Stomach (tissue), 19 donors: ENCODE measurements at regions of chr3 and their contacts with region 1.

Region 1: DNA sequence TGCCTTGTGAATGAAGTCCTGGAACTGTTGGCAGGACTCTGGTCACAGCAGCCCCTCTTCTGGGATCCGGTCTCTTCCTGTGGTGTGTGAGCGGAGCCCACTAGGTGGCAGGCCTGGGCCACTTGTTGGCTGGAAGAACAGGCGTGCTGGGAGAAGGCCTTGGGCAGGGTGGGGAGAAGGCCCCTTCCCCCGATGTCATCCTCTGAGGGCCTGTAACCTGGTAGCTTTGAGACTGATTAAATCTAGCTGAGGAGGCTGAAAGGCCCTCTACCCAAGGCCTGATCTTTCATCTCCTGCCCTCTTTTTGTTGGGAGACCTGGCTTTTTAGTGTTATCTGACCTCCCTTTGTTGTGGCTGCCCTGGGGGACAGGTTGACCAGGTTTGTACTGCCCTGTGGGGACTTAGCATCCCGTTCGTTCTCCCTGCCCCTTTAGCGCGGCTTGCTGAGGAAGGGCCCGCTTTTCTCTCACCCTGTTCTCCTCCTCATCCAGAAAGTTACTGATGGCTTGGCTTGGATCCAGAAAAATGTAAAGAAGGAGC is 48.3 kb downstream of the CHCHD6 start:
- DNase-seq: peak; percentile 76 to 92
- H3K4me3 ChIP-seq: no peak overlapping the region
- H3K27ac ChIP-seq: no peak overlapping the region
- H3K4me1 ChIP-seq: peaks cover 0 to 20% (median 4%) of the 10 kb centered on the region in 4 donors
- H3K27me3 ChIP-seq: no peaks in the 10 kb centered on the region
- CTCF ChIP-seq: peak in 5 of 7 experiments; percentile 67 to 81 (median 74)
- EP300 ChIP-seq: no peak
- POLR2A ChIP-seq: no peak

Region 2: GRCh38 chr3:126982471-126983175 is 230.2 kb after region 1 on chr3 and contains the start of gene PLXNA1:
- intact Hi-C with region 1: loop called (anchors 5 kb)
- DNase-seq: peak; percentile 81 to 89
- H3K4me3 ChIP-seq: peak within 1 kb of the TSS; percentile 69 to 91 (median 78)
- H3K27ac ChIP-seq: peak within 1 kb of the TSS; percentile 49 to 87 (median 83)
- H3K4me1 ChIP-seq: peaks cover 19 to 43% (median 34%) of the 10 kb centered on the region in 4 donors
- H3K27me3 ChIP-seq: peaks cover 0 to 35% (median 0%) of the 10 kb centered on the region in 3 donors
- CTCF ChIP-seq: peak in 5 of 7 experiments; percentile 79 to 93 (median 89)
- EP300 ChIP-seq: no peak
- POLR2A ChIP-seq: no peak
- total RNA-seq, gene PLXNA1: 12.1 to 54.7 (median 16.9) TPM